ENCODE measurements at regions of chr1 and their contacts with region 1.

Region 1: GRCh38 chr1:9867408-9868243 is 42.4 kb downstream of the CTNNBIP1 start:
- DNase-seq: peak; percentile 98
- H3K4me3 ChIP-seq: no peak overlapping the region
- H3K27ac ChIP-seq: no peak overlapping the region
- H3K4me1 ChIP-seq: peaks cover 0 to 16% (median 4%) of the 10 kb centered on the region in 4 donors
- H3K27me3 ChIP-seq: no peaks in the 10 kb centered on the region
- CTCF ChIP-seq: peak in 2 of 3 experiments; percentile 96 to 98
- EP300 ChIP-seq: no peak
- POLR2A ChIP-seq: no peak

Region 2: DNA sequence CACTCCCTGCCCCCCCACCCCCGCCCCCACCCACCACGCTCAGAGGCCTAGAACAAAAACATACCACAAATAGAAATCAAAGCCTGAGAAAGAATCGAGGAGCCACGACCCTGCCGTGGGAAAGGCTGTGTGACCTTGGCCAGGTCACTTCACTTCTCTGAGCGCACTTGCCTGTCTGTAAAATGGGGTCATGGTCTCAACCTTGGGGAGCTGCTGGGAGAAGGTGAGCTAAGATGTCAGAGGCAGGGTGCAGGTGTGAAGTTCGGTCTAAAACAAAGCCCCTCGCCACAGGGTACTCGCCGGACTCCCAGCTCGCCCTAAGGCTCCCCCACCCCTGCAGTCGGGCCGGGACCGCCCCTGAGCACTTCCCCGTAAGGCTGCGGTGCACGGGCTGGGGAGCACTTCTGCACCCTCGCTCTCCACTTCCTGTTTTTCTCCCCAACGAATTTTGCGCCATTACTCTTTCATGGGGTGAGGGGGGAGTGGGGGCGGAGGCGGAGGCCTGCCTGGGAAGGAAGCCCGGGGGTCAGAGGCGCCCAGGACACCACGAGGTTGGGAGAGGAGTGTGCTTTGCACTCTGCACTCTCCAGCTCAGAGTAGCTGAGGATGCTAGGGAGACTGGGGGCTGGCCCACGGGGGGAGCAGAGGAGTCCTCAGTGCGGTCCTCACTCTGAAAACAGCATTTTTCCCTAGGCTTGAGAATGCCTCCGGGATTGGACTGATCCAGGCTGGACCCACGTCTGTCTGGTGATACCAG is 238.0 kb before region 1 on chr1:
- intact Hi-C with region 1: loop called (anchors 5 kb)
- DNase-seq: no peak
- H3K4me3 ChIP-seq: peak overlapping the region in 2 of 4 donors; percentile 3 to 12
- H3K27ac ChIP-seq: no peak overlapping the region
- H3K4me1 ChIP-seq: peaks cover 3 to 16% (median 13%) of the 10 kb centered on the region in 4 donors
- H3K27me3 ChIP-seq: peaks cover 0 to 12% (median 0%) of the 10 kb centered on the region in 4 donors
- CTCF ChIP-seq: no peak
- EP300 ChIP-seq: no peak
- POLR2A ChIP-seq: no peak

Region 3: DNA sequence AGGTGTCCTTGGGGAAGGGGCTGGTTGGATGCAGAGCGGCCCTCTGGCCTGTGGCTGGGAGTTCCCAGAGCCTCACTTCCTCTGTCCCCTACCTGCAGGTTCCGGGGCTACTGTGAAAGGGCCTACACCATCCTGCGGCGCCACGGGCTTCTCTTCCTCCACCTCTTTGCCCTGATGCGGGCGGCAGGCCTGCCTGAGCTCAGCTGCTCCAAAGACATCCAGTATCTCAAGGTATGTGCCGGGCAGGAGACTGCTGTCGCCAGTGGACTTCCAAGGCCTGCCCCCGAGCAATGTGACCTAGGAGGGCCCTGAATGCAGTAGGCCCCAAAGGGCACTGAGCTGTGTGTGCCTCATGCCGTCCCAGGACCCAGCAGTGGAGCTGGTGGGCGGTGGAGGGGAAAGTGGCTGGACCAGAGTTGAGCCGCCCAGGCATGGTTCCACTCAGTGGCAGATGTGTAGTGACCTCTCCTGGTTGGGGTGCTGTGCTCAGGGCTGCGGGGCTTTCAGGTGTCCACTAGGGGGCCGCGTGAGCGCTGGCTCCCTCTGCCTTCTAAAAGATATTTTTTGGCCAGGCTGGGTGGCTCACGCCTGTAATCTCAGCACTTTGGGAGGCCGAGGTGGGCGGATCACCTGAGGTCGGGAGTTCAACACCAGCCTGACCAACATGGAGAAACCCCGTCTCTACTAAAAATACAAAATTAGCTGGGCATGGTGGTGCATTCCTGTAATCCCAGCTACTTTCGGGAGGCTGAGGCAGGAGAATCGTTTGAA is 142.7 kb before region 1 on chr1:
- intact Hi-C with region 1: loop called (anchors 5 kb)
- DNase-seq: peak; percentile 94
- H3K4me3 ChIP-seq: no peak overlapping the region
- H3K27ac ChIP-seq: no peak overlapping the region
- H3K4me1 ChIP-seq: peaks cover 0 to 7% (median 3%) of the 10 kb centered on the region in 4 donors
- H3K27me3 ChIP-seq: no peaks in the 10 kb centered on the region
- CTCF ChIP-seq: peak; percentile 62 to 94 (median 71)
- EP300 ChIP-seq: no peak
- POLR2A ChIP-seq: no peak

Region 4: DNA sequence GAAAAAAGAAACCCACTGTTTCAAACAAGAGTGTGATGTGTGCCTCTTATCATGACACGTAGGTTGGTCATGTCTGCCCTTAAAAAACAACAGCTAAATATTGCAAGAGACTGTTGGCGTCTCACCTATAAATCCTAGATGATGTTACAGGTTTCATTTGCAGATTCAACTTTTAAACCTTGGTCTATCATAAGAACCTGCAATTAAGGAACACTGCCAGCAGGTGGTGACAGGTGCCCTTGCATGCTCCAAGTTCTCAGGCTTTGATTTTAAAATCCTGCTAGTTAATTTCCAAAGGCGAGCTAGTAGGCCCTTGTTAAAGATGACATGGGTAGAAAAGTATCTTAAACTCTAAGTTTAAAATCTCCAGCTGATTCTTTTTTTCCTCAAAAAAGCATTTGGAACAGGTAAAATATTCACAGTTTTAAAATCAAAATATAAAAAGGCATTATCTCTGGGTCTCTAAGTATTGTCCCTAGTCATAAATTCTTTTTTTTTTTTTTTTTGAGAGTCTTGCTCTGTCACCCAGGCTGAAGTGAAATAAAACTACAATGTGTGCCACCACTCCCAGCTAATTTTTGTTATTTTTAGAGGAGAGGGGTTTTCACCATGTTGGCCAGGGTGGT is 83.0 kb before region 1 on chr1:
- intact Hi-C with region 1: loop called (anchors 2 kb)
- DNase-seq: no peak
- H3K4me3 ChIP-seq: no peak overlapping the region
- H3K27ac ChIP-seq: no peak overlapping the region
- H3K4me1 ChIP-seq: peaks cover 0 to 10% (median 2%) of the 10 kb centered on the region in 4 donors
- H3K27me3 ChIP-seq: no peaks in the 10 kb centered on the region
- CTCF ChIP-seq: peak; percentile 59 to 77 (median 64)
- EP300 ChIP-seq: no peak
- POLR2A ChIP-seq: no peak

Region 5: DNA sequence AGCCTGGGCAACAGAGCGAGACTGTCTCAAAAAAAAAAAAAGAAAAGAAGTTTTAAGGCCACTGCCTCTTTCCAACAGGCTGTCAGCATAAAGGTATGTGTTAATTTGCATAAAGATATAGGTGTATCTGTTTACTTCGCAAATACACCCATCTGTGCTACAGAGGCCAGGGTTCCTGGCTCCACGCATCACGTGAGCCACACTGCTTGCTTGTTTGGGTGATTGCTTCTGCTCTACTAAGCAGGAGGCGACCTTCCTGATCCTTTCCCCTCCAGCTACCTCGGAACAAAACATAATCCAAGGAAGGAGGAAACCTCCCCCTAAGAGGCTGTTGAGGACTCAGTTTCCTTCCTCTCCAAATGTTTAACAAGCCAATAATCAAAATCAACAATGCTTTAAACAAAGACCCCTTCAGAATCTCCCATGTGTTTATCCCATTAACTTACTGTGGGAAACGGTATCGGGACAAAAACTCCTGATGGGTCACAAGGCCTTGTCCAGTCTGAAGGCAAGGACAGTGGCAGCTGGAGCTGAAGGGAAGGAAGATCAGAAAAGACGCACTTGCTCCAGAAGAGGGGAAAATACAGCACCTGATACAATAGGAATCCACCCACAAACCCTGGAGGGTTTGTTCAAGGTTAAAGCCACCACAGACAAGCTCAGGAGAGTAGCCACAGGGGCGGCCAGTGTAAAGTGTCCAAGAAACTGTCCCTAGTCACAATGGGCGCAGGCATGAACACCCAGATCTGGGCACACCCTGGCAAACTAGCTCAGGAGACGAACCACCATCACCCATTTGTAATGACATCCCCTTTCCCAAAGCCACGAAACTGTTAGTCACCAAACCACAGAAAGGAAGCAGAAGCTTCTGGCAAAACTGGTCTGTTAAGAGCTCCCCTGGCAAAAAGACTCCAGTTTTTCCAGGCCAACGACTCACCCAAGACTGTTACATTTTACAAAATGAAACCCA is 25.2 kb after region 1 on chr1:
- intact Hi-C with region 1: no loop called
- DNase-seq: no peak
- H3K4me3 ChIP-seq: no peak overlapping the region
- H3K27ac ChIP-seq: peak overlapping the region; percentile 13 to 62 (median 54)
- H3K4me1 ChIP-seq: peaks cover 32 to 47% (median 42%) of the 10 kb centered on the region in 4 donors
- H3K27me3 ChIP-seq: no peaks in the 10 kb centered on the region
- CTCF ChIP-seq: no peak
- EP300 ChIP-seq: no peak
- POLR2A ChIP-seq: no peak

Measured in esophagus muscularis mucosa (tissue), 4 donors.